Heart right ventricle (tissue), 16 donors: ENCODE measurements at regions of chr22 and their contacts with region 1.

Region 1: GRCh38 chr22:30005213-30005857 is 74.9 kb upstream of the HORMAD2 start:
- DNase-seq: peak; percentile 66 to 69
- ATAC-seq: peak; percentile 79 to 93 (median 91)
- H3K4me3 ChIP-seq: no peak overlapping the region
- H3K27ac ChIP-seq: peak overlapping the region in 3 of 10 donors; percentile 5 to 27 (median 23)
- H3K4me1 ChIP-seq: peaks cover 3 to 16% (median 12%) of the 10 kb centered on the region in 9 donors
- H3K27me3 ChIP-seq: no peaks in the 10 kb centered on the region
- CTCF ChIP-seq: peak; percentile 80 to 98 (median 96)

Region 2: DNA sequence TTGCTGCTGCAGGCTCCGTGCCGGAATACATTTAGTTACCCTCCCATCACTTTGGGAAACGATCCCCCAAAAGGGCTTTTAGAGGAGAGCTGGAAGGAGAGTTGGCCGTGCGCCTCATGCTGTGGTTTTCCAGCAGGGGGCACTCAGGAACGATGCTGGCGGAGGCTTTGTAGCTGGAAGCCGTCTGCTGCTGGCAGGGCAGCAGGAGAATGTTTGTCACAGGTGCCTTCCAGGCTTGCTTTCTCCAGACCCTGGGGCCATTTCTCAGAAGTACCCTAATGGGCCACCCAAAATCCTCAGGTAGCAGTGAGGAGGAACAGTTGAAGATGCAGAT is 315.5 kb before region 1 on chr22:
- intact Hi-C with region 1: loop called in 4 of 10 experiments (anchors 5 to 10 kb)
- DNase-seq: peak; percentile 43 to 51
- ATAC-seq: peak in 6 of 8 donors; percentile 65 to 79 (median 73)
- H3K4me3 ChIP-seq: no peak overlapping the region
- H3K27ac ChIP-seq: no peak overlapping the region
- H3K4me1 ChIP-seq: no peaks in the 10 kb centered on the region
- H3K27me3 ChIP-seq: no peaks in the 10 kb centered on the region
- CTCF ChIP-seq: peak; percentile 34 to 77 (median 72)

Region 3: GRCh38 chr22:29727131-29727523 is 278.2 kb before region 1 on chr22:
- intact Hi-C with region 1: loop called in 1 of 10 experiments (anchors 5 kb)
- DNase-seq: peak in 1 of 2 donors; percentile 47
- ATAC-seq: peak in 6 of 8 donors; percentile 37 to 45 (median 40)
- H3K4me3 ChIP-seq: no peak overlapping the region
- H3K27ac ChIP-seq: no peak overlapping the region
- H3K4me1 ChIP-seq: no peaks in the 10 kb centered on the region
- H3K27me3 ChIP-seq: peaks cover 0 to 40% (median 14%) of the 10 kb centered on the region in 7 donors
- CTCF ChIP-seq: peak in 8 of 9 donors; percentile 14 to 59 (median 48)

Region 4: GRCh38 chr22:29798801-29799680 is 206.3 kb before region 1 on chr22:
- intact Hi-C with region 1: loop called in 1 of 10 experiments (anchors 10 kb)
- DNase-seq: peak; percentile 84 to 90
- ATAC-seq: peak; percentile 95 to 98 (median 97)
- H3K4me3 ChIP-seq: peak overlapping the region in 4 of 10 donors; percentile 10 to 18 (median 16)
- H3K27ac ChIP-seq: peak overlapping the region; percentile 52 to 94 (median 82)
- H3K4me1 ChIP-seq: peaks cover 11 to 46% (median 32%) of the 10 kb centered on the region in 9 donors
- H3K27me3 ChIP-seq: no peaks in the 10 kb centered on the region
- CTCF ChIP-seq: peak in 3 of 9 donors; percentile 21 to 30 (median 24)

Region 5: GRCh38 chr22:29837780-29838598 is 167.3 kb before region 1 on chr22 and contains the start of gene ASCC2:
- intact Hi-C with region 1: loop called in 3 of 10 experiments (anchors 1 to 10 kb)
- DNase-seq: peak; percentile 99
- ATAC-seq: peak; percentile 97 to 100 (median 100)
- H3K4me3 ChIP-seq: peak within 1 kb of the TSS; percentile 50 to 97 (median 84)
- H3K27ac ChIP-seq: peak within 1 kb of the TSS; percentile 9 to 93 (median 83)
- H3K4me1 ChIP-seq: peaks cover 9 to 55% (median 32%) of the 10 kb centered on the region in 9 donors
- H3K27me3 ChIP-seq: no peaks in the 10 kb centered on the region
- CTCF ChIP-seq: peak in 3 of 9 donors; percentile 3 to 13 (median 7)
- total RNA-seq, gene ASCC2: 26.6 to 42.1 (median 33.1) TPM

Region 6: GRCh38 chr22:30089655-30089974 is 84.3 kb after region 1 on chr22:
- intact Hi-C with region 1: no loop called
- DNase-seq: no peak
- ATAC-seq: no peak
- H3K4me3 ChIP-seq: no peak overlapping the region
- H3K27ac ChIP-seq: no peak overlapping the region
- H3K4me1 ChIP-seq: peaks cover 0 to 7% (median 0%) of the 10 kb centered on the region in 9 donors
- H3K27me3 ChIP-seq: peaks cover 0 to 24% (median 11%) of the 10 kb centered on the region in 7 donors
- CTCF ChIP-seq: no peak